Ovary (tissue), 10 donors: ENCODE measurements at regions of chr1 and their contacts with region 1.

Region 1: DNA sequence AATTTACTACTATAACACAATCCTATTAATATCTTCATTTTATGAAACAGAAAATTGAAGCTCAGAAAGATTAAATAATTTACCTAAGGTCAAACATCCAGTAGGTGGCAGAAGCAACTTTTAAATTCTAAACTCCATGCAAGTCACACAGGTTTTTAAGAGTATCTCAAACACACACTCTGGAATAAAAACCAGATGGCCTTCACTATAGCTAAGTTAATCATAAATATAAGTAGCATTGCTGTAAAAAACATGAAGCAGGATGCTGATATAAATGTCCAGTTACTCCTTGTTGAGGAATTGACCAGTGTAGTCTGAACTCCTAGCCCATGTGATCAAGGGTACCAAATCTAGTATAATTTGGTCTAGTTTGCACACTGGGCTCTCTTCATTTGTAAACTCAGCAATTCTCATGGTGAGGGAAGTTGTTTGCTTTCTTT is 9.4 kb upstream of the FMO3 start:
- DNase-seq: no peak
- H3K4me3 ChIP-seq: no peak overlapping the region
- H3K27ac ChIP-seq: peak overlapping the region in 1 of 2 donors; percentile 34
- H3K4me1 ChIP-seq: peaks cover 3% of the 10 kb centered on the region
- H3K27me3 ChIP-seq: no peaks in the 10 kb centered on the region
- CTCF ChIP-seq: peak in 2 of 3 donors; percentile 47 to 71
- EP300 ChIP-seq: no peak
- POLR2A ChIP-seq: no peak

Region 2: GRCh38 chr1:171220581-171221054 is 139.3 kb after region 1 on chr1:
- intact Hi-C with region 1: loop called in 2 of 4 experiments (anchors 5 kb)
- DNase-seq: peak; percentile 21 to 49 (median 26)
- H3K4me3 ChIP-seq: peak overlapping the region; percentile 5
- H3K27ac ChIP-seq: peak overlapping the region; percentile 51 to 68
- H3K4me1 ChIP-seq: peaks cover 11% of the 10 kb centered on the region
- H3K27me3 ChIP-seq: no peaks in the 10 kb centered on the region
- CTCF ChIP-seq: no peak
- EP300 ChIP-seq: no peak
- POLR2A ChIP-seq: no peak

Region 3: GRCh38 chr1:171226747-171227370 is 145.5 kb after region 1 on chr1:
- intact Hi-C with region 1: loop called in 2 of 4 experiments (anchors 5 kb)
- DNase-seq: peak in 4 of 5 donors; percentile 28 to 65 (median 35)
- H3K4me3 ChIP-seq: no peak overlapping the region
- H3K27ac ChIP-seq: no peak overlapping the region
- H3K4me1 ChIP-seq: peaks cover 1% of the 10 kb centered on the region
- H3K27me3 ChIP-seq: no peaks in the 10 kb centered on the region
- CTCF ChIP-seq: peak; percentile 73 to 90 (median 82)
- EP300 ChIP-seq: no peak
- POLR2A ChIP-seq: no peak

Region 4: GRCh38 chr1:171313835-171314320 is 232.5 kb after region 1 on chr1 and contains the start of gene FMO4:
- intact Hi-C with region 1: loop called in 1 of 4 experiments (anchors 10 kb)
- DNase-seq: peak; percentile 79 to 94 (median 89)
- H3K4me3 ChIP-seq: peak within 1 kb of the TSS; percentile 27
- H3K27ac ChIP-seq: peak within 1 kb of the TSS in 1 of 2 donors; percentile 55
- H3K4me1 ChIP-seq: peaks cover 2% of the 10 kb centered on the region
- H3K27me3 ChIP-seq: no peaks in the 10 kb centered on the region
- CTCF ChIP-seq: peak; percentile 74 to 94 (median 85)
- EP300 ChIP-seq: peak; percentile 58
- POLR2A ChIP-seq: no peak
- total RNA-seq, gene FMO4: 1.9 to 4.4 (median 3.7) TPM